ENCODE measurements at regions of chr15 and their contacts with region 1.

Region 1: DNA sequence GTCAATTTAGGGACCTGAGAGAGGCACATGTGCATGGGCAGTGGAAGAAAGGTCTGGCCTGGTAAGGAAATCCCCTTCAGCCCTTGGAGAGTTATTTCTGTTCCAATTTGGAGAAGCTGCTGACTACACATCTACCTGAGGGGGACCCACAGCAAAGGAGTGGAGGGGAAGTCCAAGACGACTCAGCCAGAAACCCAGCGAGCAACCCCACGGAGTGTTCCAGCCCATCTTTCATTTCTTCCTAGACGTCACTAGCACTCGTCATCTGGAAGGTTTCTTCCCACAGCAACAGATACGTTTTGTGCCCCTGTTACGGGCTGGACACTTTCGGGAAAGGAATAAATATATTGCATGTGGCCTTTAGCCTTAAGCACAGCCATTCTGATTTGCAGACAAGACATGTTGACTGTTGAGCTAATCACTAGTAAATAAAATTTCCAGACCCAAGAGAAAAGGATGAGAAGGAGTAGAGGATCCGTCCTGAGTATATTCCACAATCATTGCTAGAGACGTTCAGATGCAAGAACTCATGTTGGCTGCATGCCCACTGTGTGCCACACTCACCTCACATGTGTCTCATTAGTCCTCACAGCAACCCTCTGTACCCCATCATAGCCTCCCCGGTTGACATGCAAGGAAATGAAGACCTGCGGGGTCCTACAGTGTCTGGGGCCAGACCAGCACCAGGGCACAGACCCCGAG is 7.8 kb upstream of the FAM174B start:
- DNase-seq: no peak
- H3K4me3 Mint-ChIP-seq: no peak overlapping the region
- H3K27ac Mint-ChIP-seq: no peak overlapping the region
- H3K4me1 Mint-ChIP-seq: peaks cover 10% of the 10 kb centered on the region
- H3K27me3 Mint-ChIP-seq: peaks cover 13% of the 10 kb centered on the region

Region 2: GRCh38 chr15:92625251-92625980 is 38.0 kb before region 1 on chr15:
- intact Hi-C with region 1: loop called (anchors 2 kb)
- DNase-seq: no peak
- H3K4me3 Mint-ChIP-seq: peak overlapping the region; percentile 27
- H3K27ac Mint-ChIP-seq: peak overlapping the region; percentile 74
- H3K4me1 Mint-ChIP-seq: peaks cover 15% of the 10 kb centered on the region
- H3K27me3 Mint-ChIP-seq: peaks cover 5% of the 10 kb centered on the region

Measured in activated T-helper 1 cell treated with anti-CD3 and anti-CD28 coated beads, Interleukin-12 subunit alpha, Interleukin-12 subunit beta, Interleukin-2, Interleukin-4 antibody, amounts not matched to agents 30 ng/mL and 10 ng/mL and 1 ng/mL, durations not matched to agents 14 hours and 24 hours and 36 hours (primary cell).